Activated naive CD8-positive, alpha-beta T cell treated with anti-CD3 and anti-CD28 coated beads, Interleukin-2, amount 10 ng/mL, durations not matched to agents 7 days and 5 days (primary cell): ENCODE measurements at regions of chr1 and their contacts with region 1.

Region 1: GRCh38 chr1:8536515-8536914 is 218.6 kb downstream of the SLC45A1 start:
- DNase-seq: no peak
- ATAC-seq: no peak
- H3K4me3 Mint-ChIP-seq: no peak overlapping the region
- H3K27ac Mint-ChIP-seq: no peak overlapping the region
- H3K4me1 Mint-ChIP-seq: peaks cover 28% of the 10 kb centered on the region
- H3K27me3 Mint-ChIP-seq: no peaks in the 10 kb centered on the region

Region 2: DNA sequence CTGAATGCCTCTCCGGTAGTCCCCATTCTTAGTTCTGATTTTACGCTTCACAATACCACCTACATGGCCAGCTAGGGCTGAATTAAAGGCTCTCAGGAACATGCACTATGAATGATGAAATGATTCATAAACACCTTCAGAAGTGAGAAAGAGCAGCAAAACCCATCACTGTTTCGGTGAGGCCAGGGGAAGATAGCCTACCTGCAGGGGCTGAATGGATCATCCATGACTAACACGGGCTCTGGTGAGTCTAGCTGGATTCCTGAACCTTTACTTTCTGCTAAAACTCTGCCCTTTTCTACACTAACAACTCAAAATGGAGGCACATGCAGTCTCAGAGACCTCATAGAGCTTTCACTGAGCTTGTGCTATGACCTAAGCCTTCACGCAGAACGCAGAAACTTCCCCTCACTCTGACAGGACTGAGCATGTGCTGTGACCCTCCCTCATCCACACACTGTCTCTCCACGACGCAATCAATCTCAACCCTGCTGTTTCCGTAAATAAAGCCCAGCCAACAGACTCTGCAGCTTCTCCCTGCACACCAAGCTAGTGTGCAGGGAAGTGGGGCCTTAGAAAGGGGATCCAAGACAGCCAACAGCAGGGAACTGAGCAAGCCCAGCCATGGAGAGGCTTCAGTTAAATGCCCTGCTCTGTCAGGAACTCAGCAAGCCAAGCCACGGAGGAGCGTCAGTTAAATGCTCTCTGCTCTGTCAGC is 10.8 kb before region 1 on chr1:
- POLR2A ChIA-PET with region 1: interaction called, 15 read pairs
- DNase-seq: peak; percentile 48
- ATAC-seq: peak; percentile 92
- H3K4me3 Mint-ChIP-seq: no peak overlapping the region
- H3K27ac Mint-ChIP-seq: no peak overlapping the region
- H3K4me1 Mint-ChIP-seq: peaks cover 19% of the 10 kb centered on the region
- H3K27me3 Mint-ChIP-seq: no peaks in the 10 kb centered on the region

Region 3: DNA sequence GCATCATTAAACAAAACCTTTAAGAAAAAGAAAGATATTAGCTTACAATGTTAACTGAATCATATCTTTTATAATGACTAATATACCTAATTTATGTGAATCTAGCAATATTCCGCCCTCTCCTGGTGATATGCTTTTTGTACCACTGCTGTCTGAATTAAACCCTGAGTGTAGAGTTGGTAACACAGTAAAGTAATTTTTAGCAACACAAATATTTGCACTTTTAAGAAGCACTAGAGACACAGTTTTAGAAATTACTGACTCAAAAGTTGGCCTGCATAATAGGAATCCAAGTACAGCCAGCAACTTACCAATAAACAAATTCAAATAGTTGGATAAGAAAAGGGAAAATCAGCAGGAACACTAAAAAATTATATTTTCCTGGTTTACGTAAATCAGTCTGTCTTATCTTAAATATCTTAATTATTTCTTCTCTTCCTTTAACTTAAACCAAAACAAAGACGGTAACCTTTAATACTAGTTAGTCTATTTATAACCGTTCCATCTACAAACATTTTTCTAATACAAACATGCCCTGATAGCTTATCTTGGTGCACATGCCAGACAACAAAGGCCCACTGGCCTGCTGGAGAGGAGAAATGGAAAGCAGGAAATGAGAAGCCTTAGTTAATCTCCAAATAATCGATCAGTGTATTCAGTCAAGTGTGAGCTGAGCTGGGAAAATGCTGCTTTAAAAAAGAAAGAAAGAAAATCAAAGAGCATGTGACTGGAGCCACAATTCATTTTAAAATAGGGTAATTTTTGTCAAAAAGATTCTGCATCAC is 34.9 kb after region 1 on chr1:
- POLR2A ChIA-PET with region 1: no interaction called
- DNase-seq: no peak
- ATAC-seq: no peak
- H3K4me3 Mint-ChIP-seq: no peak overlapping the region
- H3K27ac Mint-ChIP-seq: no peak overlapping the region
- H3K4me1 Mint-ChIP-seq: peaks cover 4% of the 10 kb centered on the region
- H3K27me3 Mint-ChIP-seq: no peaks in the 10 kb centered on the region